ENCODE measurements at regions of chr17 and their contacts with region 1.

Region 1: DNA sequence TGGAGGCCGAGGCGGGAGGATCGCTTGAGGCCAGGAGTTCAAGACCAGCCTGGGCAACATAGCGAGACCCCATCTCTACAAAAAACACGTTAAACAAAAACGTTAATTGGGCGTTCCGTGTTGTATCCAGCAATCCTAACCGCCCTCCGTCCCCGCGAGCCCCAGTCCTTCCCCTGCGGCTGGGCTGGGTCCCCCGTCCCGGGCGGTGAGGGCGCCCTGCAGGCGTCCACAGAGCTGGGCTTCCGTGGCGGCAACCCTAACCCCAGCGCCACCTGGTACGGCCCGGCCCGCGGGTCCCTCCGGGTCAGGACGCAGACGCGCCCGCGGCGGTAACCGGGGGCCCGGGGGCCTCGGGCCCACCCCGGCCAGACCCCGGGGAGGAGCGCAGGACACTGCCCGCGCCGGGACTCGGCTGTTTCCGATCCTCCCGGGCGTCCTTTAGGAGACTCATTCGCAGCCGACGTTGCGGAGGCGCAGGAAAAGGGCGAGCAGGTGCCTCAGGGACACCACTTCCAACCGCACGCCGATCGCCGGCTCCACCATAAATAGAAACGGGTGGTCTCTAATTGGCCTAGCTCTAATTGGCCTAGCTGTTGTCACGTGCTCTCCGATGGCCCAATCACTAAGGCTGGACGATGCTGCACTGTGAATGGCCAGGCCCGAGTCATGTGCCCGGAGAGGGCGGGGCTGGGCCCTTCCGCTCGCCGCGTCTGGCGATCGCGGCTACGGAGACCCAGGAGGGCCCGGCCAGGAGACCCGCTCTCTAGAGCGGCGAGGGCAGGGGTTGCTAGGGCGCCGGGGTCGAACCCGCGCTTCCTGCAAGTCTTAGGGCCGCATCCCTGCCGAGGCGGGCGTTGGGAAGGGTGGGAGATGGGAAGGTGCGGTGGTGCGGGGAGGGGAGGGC is 19.0 kb upstream of the CSNK1D start:
- DNase-seq: peak; percentile 98
- ATAC-seq: peak; percentile 95
- H3K4me3 Mint-ChIP-seq: peak overlapping the region; percentile 75
- H3K27ac Mint-ChIP-seq: peak overlapping the region; percentile 84
- H3K4me1 Mint-ChIP-seq: peaks cover 44% of the 10 kb centered on the region
- H3K27me3 Mint-ChIP-seq: no peaks in the 10 kb centered on the region

Region 2: DNA sequence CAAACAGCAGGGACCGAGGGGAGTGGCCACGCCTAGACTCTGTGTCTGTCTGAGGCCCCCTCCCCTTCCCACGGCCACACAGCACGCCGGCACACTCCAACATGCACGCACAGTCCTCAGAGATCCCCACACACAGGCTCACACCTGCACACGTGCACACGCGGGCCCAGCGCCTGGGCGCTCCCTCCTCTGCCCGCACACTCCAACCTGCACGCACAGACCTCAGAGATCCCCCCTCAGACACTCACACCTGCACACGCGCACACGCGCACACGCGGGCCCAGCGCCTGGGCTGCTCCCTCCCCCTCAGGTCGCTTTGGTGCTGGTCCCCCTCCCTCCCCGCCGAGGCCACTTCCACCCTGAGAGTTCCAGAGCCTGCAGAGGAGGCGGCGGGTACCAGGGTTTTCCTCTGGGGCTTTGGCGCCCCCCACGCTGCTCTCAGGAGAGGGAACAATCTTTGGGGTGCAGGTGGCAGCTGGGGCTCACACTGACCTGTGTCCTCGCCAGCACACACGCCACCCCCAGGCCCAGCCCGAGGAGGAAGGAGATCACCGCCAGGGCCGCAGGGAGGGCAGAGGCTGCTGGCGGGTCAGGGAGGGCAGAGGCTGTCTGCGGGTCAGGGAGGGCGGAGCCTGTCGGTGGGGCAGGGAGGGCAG is 23.3 kb after region 1 on chr17:
- CTCF ChIA-PET with region 1: interaction called, 206 read pairs
- DNase-seq: peak; percentile 64
- ATAC-seq: peak; percentile 39
- H3K4me3 Mint-ChIP-seq: peak overlapping the region; percentile 93
- H3K27ac Mint-ChIP-seq: peak overlapping the region; percentile 75
- H3K4me1 Mint-ChIP-seq: peaks cover 14% of the 10 kb centered on the region
- H3K27me3 Mint-ChIP-seq: no peaks in the 10 kb centered on the region

Region 3: GRCh38 chr17:82358465-82359350 is 66.2 kb after region 1 on chr17 and contains the start of gene TEX19:
- CTCF ChIA-PET with region 1: no interaction called
- DNase-seq: peak; percentile 50
- ATAC-seq: peak; percentile 58
- H3K4me3 Mint-ChIP-seq: no peak within 1 kb of the TSS
- H3K27ac Mint-ChIP-seq: no peak within 1 kb of the TSS
- H3K4me1 Mint-ChIP-seq: peaks cover 7% of the 10 kb centered on the region
- H3K27me3 Mint-ChIP-seq: peaks cover 14% of the 10 kb centered on the region
- total RNA-seq, gene TEX19: 0.15 TPM in 1 of 2 experiments, not detected in the other

Measured in activated CD8-positive, alpha-beta memory T cell treated with anti-CD3 and anti-CD28 coated beads, Interleukin-2, amount 10 ng/mL, durations not matched to agents 7 days and 5 days (primary cell).